Mammary epithelial cell (primary cell): ENCODE measurements at regions of chr16 and their contacts with region 1.

Region 1: GRCh38 chr16:31382485-31383161 is 10.5 kb upstream of the ITGAD start:
- DNase-seq: peak; percentile 31
- H3K4me3 ChIP-seq: no peak overlapping the region
- H3K27ac ChIP-seq: no peak overlapping the region
- H3K4me1 ChIP-seq: peaks cover 19% of the 10 kb centered on the region
- H3K27me3 ChIP-seq: no peaks in the 10 kb centered on the region
- CTCF ChIP-seq: peak; percentile 70 to 93

Region 2: DNA sequence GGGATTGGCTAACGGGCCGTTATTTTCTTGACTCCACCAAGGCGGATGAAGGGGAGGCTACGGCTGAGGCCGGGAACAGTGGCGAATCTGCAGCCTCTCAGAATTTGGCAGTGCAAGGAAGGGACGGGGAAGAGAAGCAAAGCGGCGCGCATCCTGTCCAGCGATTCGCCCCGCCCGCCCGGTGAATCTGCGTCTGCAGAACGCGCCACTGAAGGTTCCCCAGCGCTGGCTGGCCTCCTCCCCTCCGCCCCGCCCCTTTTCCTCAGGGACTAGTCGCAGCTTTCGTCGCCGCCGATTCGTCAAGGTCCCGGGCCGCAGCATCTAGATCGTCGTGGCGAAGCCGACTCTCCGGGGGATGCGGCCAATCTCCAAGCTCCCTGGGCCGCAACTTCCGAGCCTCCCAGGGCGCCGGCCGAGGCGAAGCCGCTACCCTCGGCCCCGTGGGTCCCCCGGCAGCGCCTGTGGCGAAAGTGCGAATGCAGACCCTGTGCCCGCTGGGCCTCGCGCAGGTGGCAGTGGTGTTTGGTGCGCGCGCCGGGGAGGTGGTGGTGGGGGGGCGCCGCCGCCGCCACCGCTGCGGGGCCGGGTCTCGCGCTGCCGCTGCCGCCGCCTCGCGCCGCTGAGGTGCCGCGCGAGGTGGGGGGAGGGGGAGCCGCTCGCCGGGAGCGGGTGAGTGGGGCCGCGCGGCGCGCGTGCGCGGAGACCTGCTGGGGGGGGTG is 425.0 kb before region 1 on chr16 and contains the start of gene SETD1A:
- CTCF ChIA-PET with region 1: no interaction called
- dilution Hi-C with region 1: no loop called
- in situ Hi-C with region 1: no loop called
- intact Hi-C with region 1: no loop called
- DNase-seq: peak; percentile 93
- H3K4me3 ChIP-seq: peak within 1 kb of the TSS; percentile 91 to 95 (median 93)
- H3K27ac ChIP-seq: peak within 1 kb of the TSS; percentile 91
- H3K4me1 ChIP-seq: peaks cover 15% of the 10 kb centered on the region
- H3K27me3 ChIP-seq: no peaks in the 10 kb centered on the region
- CTCF ChIP-seq: no peak
- total RNA-seq, gene SETD1A: 8.5 to 14.8 TPM

Region 3: GRCh38 chr16:31179747-31180459 is 202.7 kb before region 1 on chr16 and contains the start of gene FUS:
- CTCF ChIA-PET with region 1: no interaction called
- dilution Hi-C with region 1: no loop called
- in situ Hi-C with region 1: no loop called
- intact Hi-C with region 1: loop called (anchors 5 kb)
- DNase-seq: peak; percentile 79
- H3K4me3 ChIP-seq: peak within 1 kb of the TSS; percentile 62 to 95 (median 75)
- H3K27ac ChIP-seq: peak within 1 kb of the TSS; percentile 95
- H3K4me1 ChIP-seq: peaks cover 27% of the 10 kb centered on the region
- H3K27me3 ChIP-seq: no peaks in the 10 kb centered on the region
- CTCF ChIP-seq: no peak
- total RNA-seq, gene FUS: 19.5 to 404 TPM

Region 4: DNA sequence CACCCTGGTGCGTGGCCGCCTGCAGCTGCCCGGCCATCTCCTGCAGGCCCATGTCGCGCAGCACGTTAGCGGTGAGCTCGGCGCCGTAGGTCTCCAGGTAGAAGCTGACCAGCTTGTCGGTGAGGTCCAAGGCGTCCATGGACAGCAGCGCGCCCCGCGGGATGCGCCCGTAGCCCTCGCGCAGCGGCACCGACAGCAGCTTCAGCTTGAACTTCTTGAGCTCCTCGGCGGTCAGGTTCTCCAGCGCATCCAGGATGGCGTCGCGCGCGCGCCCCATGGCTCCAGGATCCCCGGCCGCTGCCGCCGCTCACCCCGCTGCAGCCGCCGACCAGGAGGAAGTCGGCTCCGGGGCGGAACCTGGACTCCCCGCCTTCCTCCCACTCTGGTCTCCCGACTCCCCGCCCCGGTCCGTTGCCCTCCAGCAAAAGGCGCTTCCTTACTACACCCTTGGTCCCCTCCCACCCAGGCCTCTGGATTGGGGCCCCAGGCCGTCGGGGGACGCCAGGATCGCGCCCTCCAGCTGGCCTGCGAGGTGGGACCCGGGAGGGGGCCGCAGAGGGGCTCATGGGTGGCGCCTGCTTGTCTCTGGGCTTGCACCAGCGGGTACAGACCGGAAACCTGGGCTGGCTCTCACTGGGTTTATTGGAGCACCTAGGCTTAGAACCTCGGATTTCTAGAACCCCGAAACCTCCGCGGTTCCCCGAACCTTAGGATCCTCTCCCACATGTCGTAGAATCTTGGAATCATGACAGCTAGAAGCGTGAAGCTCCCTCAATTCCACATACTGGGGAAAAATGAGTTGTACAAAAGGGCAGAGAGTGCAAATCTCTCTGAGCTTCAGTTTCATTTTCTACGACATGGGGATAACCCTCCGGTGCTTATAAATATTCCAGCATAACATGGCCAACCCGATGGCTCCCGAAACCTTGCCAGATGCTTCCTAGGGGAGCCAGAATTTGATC is 179.9 kb before region 1 on chr16 and contains the start of gene PYCARD:
- CTCF ChIA-PET with region 1: interaction called, 6 read pairs
- dilution Hi-C with region 1: no loop called
- in situ Hi-C with region 1: no loop called
- intact Hi-C with region 1: loop called (anchors 5 kb)
- DNase-seq: peak; percentile 49
- H3K4me3 ChIP-seq: peak within 1 kb of the TSS; percentile 49 to 90 (median 56)
- H3K27ac ChIP-seq: peak within 1 kb of the TSS; percentile 45
- H3K4me1 ChIP-seq: peaks cover 16% of the 10 kb centered on the region
- H3K27me3 ChIP-seq: no peaks in the 10 kb centered on the region
- CTCF ChIP-seq: no peak
- total RNA-seq, gene PYCARD: 30.3 to 38.8 TPM

Region 5: GRCh38 chr16:31215287-31216162 is 167.1 kb before region 1 on chr16:
- CTCF ChIA-PET with region 1: interaction called, 4 read pairs
- dilution Hi-C with region 1: no loop called
- in situ Hi-C with region 1: no loop called
- intact Hi-C with region 1: loop called (anchors 5 kb)
- DNase-seq: peak; percentile 53
- H3K4me3 ChIP-seq: peak overlapping the region in 2 of 3 experiments; percentile 32 to 49
- H3K27ac ChIP-seq: no peak overlapping the region
- H3K4me1 ChIP-seq: peaks cover 24% of the 10 kb centered on the region
- H3K27me3 ChIP-seq: peaks cover 15% of the 10 kb centered on the region
- CTCF ChIP-seq: no peak

Region 6: DNA sequence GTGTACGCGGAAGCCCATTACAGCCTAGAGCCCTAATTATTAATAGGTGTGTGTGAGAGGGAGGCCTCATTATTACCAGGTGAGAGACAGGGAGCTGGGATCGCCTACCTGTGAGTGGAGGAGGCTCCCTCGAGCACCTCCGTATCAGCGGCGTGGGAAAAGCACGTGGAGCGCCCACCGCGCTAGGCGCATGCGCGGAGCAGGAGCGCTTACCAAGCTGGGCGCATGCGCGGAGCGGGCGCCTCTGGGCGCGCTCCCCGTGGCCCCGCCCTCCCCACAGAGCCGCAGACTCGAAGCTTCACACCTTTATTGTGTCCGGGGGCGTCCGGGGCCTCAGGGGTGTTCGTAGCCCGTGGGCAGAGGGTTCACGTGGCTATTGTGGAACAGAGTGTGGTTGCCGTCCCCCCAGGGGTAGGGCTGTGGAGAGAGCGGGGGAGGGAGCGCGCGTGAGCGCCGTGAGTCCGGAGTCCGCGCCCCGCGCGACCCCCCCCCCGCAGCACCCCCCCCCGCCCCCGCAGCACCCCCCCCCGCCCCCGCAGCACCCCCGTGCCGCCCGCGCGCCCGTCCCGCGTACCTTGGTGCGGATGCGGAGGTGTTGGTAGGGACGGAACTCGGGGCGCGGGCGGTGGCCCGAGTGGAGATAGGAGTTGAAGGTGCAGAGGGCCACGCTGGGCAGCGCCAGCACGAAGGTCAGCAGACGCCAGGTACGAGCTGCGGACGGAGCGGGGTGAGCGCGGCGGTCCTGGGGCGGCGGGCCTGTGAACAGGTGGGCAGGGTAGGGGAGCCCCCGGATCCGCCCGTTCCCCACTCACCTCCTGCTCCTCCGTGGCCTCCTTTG is 45.0 kb after region 1 on chr16:
- CTCF ChIA-PET with region 1: no interaction called
- dilution Hi-C with region 1: loop called (anchors 5 kb)
- in situ Hi-C with region 1: no loop called
- intact Hi-C with region 1: loop called (anchors 5 kb)
- DNase-seq: no peak
- H3K4me3 ChIP-seq: peak overlapping the region in 2 of 3 experiments; percentile 24 to 26
- H3K27ac ChIP-seq: no peak overlapping the region
- H3K4me1 ChIP-seq: peaks cover 3% of the 10 kb centered on the region
- H3K27me3 ChIP-seq: peaks cover 2% of the 10 kb centered on the region
- CTCF ChIP-seq: no peak